Mucosa of descending colon (tissue), 3 donors: ENCODE measurements at regions of chr18 and their contacts with region 1.

Region 1: DNA sequence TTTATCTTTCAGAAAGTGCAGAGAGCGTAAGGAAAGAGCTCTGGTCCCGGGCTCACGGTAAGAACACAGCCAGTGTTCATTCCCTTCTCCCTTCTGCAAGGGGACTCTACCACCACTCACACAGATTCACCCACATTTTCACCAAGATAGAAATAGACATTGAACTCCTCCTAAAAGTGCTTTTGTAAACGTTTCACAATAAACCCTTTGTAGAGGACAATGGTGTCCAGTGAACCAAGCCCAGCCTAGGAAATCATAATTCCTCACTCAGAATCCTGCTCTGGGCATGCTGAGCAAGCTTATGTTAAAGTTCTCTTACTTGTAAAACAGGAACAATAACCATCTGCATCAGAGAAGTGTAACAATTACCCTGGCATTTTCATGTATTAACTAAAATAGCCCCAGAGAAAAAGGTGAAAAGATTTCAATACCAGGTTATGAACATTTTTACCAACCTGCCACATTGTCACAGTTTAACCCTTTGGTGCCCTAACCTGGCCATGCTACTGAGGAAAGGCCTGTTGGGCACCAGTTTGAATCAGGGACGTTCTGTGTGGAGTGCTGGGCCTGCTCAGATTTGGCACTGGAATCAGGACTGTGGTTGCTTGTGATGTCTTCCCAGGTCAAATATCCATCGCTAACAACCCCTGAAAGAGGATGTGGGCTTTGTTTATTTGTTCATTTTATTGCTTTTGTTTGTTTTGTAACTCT is 22.5 kb upstream of the NDUFV2 start:
- DNase-seq: no peak
- ATAC-seq: no peak
- H3K4me3 ChIP-seq: no peak overlapping the region
- H3K4me1 ChIP-seq: no peaks in the 10 kb centered on the region
- CTCF ChIP-seq: no peak

Region 2: DNA sequence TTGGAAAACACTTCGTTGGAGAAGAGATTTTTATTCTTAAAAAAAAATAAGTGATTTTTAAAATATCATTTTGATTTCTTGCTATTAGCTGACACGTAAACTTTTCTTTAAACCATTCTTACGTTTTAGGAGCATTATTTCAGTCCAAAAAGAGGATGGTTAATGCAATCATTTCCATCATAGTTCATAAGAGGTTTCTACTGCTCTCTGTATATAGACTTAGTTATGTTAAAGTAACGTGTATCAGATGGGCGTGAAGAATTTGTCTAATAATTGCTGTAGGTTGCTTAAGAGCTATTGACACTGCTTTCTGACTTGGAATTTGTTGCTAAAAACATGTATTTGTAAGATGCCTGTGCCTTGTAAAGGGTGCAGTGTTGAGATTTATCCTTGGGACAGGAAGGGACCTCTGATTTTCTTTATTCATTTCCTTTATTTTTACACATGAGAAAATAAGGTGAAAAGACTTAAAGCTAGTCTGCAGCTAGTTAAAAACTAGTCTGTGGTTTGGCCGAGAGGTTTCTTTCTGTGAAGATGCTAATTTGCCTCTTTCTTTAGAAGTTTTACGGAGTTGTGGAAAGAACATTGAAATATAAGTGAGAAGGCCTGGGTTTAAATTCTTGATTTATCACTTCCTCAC is 59.5 kb after region 1 on chr18:
- intact Hi-C with region 1: loop called in 1 of 2 experiments (anchors 5 kb)
- DNase-seq: no peak
- ATAC-seq: no peak
- H3K4me3 ChIP-seq: no peak overlapping the region
- H3K4me1 ChIP-seq: peaks cover 37% of the 10 kb centered on the region
- CTCF ChIP-seq: no peak

Region 3: DNA sequence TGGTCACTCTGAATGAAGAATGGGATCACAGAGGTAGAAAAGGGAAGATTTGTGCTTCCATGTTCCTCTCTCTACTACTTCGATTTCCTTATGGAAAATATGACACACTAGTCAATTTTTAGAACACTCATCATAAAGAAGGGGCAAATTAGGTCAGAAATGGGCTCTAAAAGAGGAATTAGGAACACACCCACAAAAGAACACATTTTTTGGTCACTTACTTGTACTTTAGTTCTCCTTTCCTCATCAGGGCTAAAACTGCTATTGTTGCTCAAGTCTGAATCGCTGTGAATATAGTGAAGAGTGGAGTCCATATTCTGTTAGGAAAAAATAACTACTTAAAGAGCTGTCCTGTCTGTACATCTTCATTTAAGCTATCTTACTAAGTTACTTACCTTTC is 481.8 kb after region 1 on chr18:
- intact Hi-C with region 1: no loop called
- DNase-seq: no peak
- ATAC-seq: no peak
- H3K4me3 ChIP-seq: no peak overlapping the region
- H3K4me1 ChIP-seq: no peaks in the 10 kb centered on the region
- CTCF ChIP-seq: no peak